Natural killer cell (primary cell): ENCODE measurements at regions of chr19 and their contacts with region 1.

Region 1: GRCh38 chr19:19732579-19733501 is at the start of gene ZNF14:
- DNase-seq: peak; percentile 90 to 96
- ATAC-seq: peak; percentile 100
- H3K4me3 ChIP-seq: peak within 1 kb of the TSS; percentile 96
- H3K4me3 Mint-ChIP-seq: peak within 1 kb of the TSS; percentile 99
- H3K27ac ChIP-seq: peak within 1 kb of the TSS; percentile 73
- H3K27ac Mint-ChIP-seq: peak within 1 kb of the TSS; percentile 93 to 96
- H3K4me1 ChIP-seq: peaks cover 18% of the 10 kb centered on the region
- H3K4me1 Mint-ChIP-seq: peaks cover 17 to 36% of the 10 kb centered on the region in 2 donors
- H3K27me3 ChIP-seq: no peaks in the 10 kb centered on the region
- H3K27me3 Mint-ChIP-seq: no peaks in the 10 kb centered on the region
- CTCF ChIP-seq: no peak
- total RNA-seq, gene ZNF14: 12.7 to 18.6 (median 14.0) TPM

Region 2: GRCh38 chr19:19460761-19461265 is 272.0 kb before region 1 on chr19:
- intact Hi-C with region 1: no loop called
- DNase-seq: peak; percentile 71 to 79
- ATAC-seq: peak; percentile 61 to 77 (median 64)
- H3K4me3 ChIP-seq: peak overlapping the region; percentile 25
- H3K4me3 Mint-ChIP-seq: peak overlapping the region; percentile 95
- H3K27ac ChIP-seq: peak overlapping the region; percentile 92
- H3K27ac Mint-ChIP-seq: peak overlapping the region; percentile 97 to 100
- H3K4me1 ChIP-seq: peaks cover 97% of the 10 kb centered on the region
- H3K4me1 Mint-ChIP-seq: peaks cover 83 to 90% of the 10 kb centered on the region in 2 donors
- H3K27me3 ChIP-seq: no peaks in the 10 kb centered on the region
- H3K27me3 Mint-ChIP-seq: no peaks in the 10 kb centered on the region
- CTCF ChIP-seq: no peak

Region 3: DNA sequence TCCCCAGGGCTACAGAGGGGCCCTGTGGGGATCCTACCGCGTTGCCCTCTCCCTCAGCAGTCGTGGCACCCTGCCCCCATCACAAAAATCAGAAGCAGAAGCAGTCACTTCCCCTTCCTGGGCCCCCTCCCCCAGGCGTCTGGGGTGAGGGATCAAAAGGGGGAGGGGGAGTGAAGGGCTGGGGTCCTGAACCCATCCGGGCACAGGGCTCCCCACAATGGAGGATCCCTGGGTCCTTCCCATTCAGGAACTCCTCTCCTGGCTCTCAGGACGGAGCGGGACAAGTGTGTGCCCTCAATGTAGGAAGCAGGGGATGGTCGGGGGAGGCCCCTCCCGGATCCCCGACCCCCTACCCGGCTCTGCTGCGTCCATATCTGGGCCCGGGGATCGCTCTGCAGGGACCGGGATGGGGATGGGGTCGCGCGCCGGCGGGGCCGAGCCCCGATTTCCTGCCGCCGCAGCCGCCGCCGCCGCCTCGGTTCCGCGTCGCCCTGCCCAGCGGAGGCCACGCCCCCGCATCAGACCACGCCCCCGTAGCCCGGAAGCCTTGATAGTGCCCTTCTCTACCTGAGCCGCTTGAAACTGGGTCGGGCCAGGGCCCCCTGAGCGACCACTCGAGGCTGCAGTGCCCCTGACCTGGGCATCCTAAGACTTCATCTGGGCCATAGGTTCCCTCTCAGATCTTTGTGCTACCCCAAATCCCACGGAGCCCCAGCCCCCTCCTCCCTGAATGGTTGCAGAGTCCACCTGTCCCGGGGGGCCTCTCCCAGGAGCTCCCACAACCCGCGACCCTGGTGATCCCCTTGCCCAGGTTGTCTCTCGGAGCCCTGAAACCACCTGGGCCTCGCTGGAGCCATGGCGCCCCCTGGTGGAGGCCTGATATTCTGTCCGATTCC is 89.4 kb before region 1 on chr19 and contains the start of gene GMIP:
- intact Hi-C with region 1: no loop called
- DNase-seq: peak; percentile 88 to 93
- ATAC-seq: peak; percentile 86 to 92 (median 86)
- H3K4me3 ChIP-seq: peak within 1 kb of the TSS; percentile 99
- H3K4me3 Mint-ChIP-seq: peak within 1 kb of the TSS; percentile 98
- H3K27ac ChIP-seq: peak within 1 kb of the TSS; percentile 95
- H3K27ac Mint-ChIP-seq: peak within 1 kb of the TSS; percentile 92 to 95
- H3K4me1 ChIP-seq: peaks cover 27% of the 10 kb centered on the region
- H3K4me1 Mint-ChIP-seq: peaks cover 15 to 22% of the 10 kb centered on the region in 2 donors
- H3K27me3 ChIP-seq: no peaks in the 10 kb centered on the region
- H3K27me3 Mint-ChIP-seq: no peaks in the 10 kb centered on the region
- CTCF ChIP-seq: peak; percentile 90
- total RNA-seq, gene GMIP: 134 to 188 (median 150) TPM

Region 4: GRCh38 chr19:19668230-19669012 is 64.4 kb before region 1 on chr19 and contains the start of gene ZNF101:
- intact Hi-C with region 1: loop called (anchors 2 kb)
- DNase-seq: peak; percentile 91 to 97
- ATAC-seq: peak; percentile 66 to 81 (median 69)
- H3K4me3 ChIP-seq: peak within 1 kb of the TSS; percentile 97
- H3K4me3 Mint-ChIP-seq: peak within 1 kb of the TSS; percentile 97
- H3K27ac ChIP-seq: peak within 1 kb of the TSS; percentile 95
- H3K27ac Mint-ChIP-seq: peak within 1 kb of the TSS; percentile 95 to 97
- H3K4me1 ChIP-seq: peaks cover 63% of the 10 kb centered on the region
- H3K4me1 Mint-ChIP-seq: peaks cover 20 to 30% of the 10 kb centered on the region in 2 donors
- H3K27me3 ChIP-seq: no peaks in the 10 kb centered on the region
- H3K27me3 Mint-ChIP-seq: no peaks in the 10 kb centered on the region
- CTCF ChIP-seq: no peak
- total RNA-seq, gene ZNF101: 35.7 to 58.7 (median 41.0) TPM

Region 5: DNA sequence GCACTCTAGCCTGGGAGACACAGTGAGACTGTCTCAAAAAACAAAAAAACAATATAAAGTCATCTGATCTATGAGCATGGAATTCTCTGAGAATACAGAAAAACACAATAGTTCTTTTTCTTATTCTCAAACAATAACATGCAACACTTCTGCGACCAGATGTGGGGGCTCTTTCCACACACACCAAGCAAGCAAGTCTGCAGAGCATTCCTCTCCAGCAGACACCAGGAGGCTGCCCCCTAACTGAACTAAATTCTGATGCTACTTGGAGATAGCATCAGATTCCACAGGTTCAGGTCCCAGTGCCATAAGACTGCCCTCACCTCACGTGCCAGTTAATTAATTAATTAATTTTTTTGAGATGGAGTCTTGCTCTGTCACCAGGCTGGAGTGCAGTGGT is 36.5 kb before region 1 on chr19:
- intact Hi-C with region 1: no loop called
- DNase-seq: no peak
- ATAC-seq: no peak
- H3K4me3 ChIP-seq: no peak overlapping the region
- H3K4me3 Mint-ChIP-seq: no peak overlapping the region
- H3K27ac ChIP-seq: no peak overlapping the region
- H3K27ac Mint-ChIP-seq: no peak overlapping the region
- H3K4me1 ChIP-seq: no peaks in the 10 kb centered on the region
- H3K4me1 Mint-ChIP-seq: no peaks in the 10 kb centered on the region
- H3K27me3 ChIP-seq: no peaks in the 10 kb centered on the region
- H3K27me3 Mint-ChIP-seq: no peaks in the 10 kb centered on the region
- CTCF ChIP-seq: no peak

Region 6: GRCh38 chr19:19719798-19720197 is 13.0 kb before region 1 on chr19:
- intact Hi-C with region 1: no loop called
- DNase-seq: peak in 1 of 2 donors; percentile 27
- ATAC-seq: no peak
- H3K4me3 ChIP-seq: no peak overlapping the region
- H3K4me3 Mint-ChIP-seq: no peak overlapping the region
- H3K27ac ChIP-seq: no peak overlapping the region
- H3K27ac Mint-ChIP-seq: no peak overlapping the region
- H3K4me1 ChIP-seq: no peaks in the 10 kb centered on the region
- H3K4me1 Mint-ChIP-seq: peaks cover 15 to 17% of the 10 kb centered on the region in 2 donors
- H3K27me3 ChIP-seq: no peaks in the 10 kb centered on the region
- H3K27me3 Mint-ChIP-seq: no peaks in the 10 kb centered on the region
- CTCF ChIP-seq: no peak

Region 7: GRCh38 chr19:19776041-19777008 is 43.5 kb after region 1 on chr19:
- intact Hi-C with region 1: loop called (anchors 1 kb)
- DNase-seq: peak; percentile 86 to 95
- ATAC-seq: peak; percentile 99 to 100 (median 99)
- H3K4me3 ChIP-seq: peak overlapping the region; percentile 53
- H3K4me3 Mint-ChIP-seq: peak overlapping the region; percentile 93
- H3K27ac ChIP-seq: peak overlapping the region; percentile 58
- H3K27ac Mint-ChIP-seq: peak overlapping the region; percentile 89 to 94
- H3K4me1 ChIP-seq: peaks cover 15% of the 10 kb centered on the region
- H3K4me1 Mint-ChIP-seq: peaks cover 20 to 35% of the 10 kb centered on the region in 2 donors
- H3K27me3 ChIP-seq: no peaks in the 10 kb centered on the region
- H3K27me3 Mint-ChIP-seq: no peaks in the 10 kb centered on the region
- CTCF ChIP-seq: no peak

Region 8: GRCh38 chr19:19900729-19901444 is 168.0 kb after region 1 on chr19 and contains the start of gene ZNF93:
- intact Hi-C with region 1: loop called (anchors 5 kb)
- DNase-seq: peak; percentile 89 to 95
- ATAC-seq: peak; percentile 96 to 99 (median 99)
- H3K4me3 ChIP-seq: peak within 1 kb of the TSS; percentile 88
- H3K4me3 Mint-ChIP-seq: peak within 1 kb of the TSS; percentile 99
- H3K27ac ChIP-seq: peak within 1 kb of the TSS; percentile 73
- H3K27ac Mint-ChIP-seq: peak within 1 kb of the TSS; percentile 92 to 96
- H3K4me1 ChIP-seq: peaks cover 14% of the 10 kb centered on the region
- H3K4me1 Mint-ChIP-seq: peaks cover 20 to 32% of the 10 kb centered on the region in 2 donors
- H3K27me3 ChIP-seq: no peaks in the 10 kb centered on the region
- H3K27me3 Mint-ChIP-seq: no peaks in the 10 kb centered on the region
- CTCF ChIP-seq: no peak
- total RNA-seq, gene ZNF93: 2.2 to 5.2 (median 4.2) TPM